A549 (cell line): ENCODE measurements at regions of chr20 and their contacts with region 1.

Region 1: DNA sequence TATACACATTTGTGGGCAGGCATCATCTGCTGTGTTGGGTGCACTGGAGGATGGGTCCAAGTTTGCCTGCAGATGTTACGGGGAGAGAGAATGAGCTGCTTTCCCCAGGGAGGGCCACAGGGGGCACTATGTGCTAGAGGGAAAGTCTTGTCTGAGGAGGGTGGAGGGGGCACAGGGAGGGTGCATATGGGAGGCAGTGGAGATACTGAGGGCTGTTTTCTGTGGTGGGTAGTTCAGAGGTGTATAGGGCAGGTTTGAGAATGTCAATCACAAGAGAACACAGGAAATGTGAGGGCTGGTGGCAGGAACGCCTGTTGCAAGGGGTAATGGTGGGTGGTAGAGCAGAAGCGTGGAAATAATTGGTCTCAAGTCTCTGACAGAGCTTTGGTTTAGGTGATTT is 7.7 kb upstream of the PTPRA start:
- DNase-seq: no peak
- ATAC-seq: peak in 1 of 2 experiments; percentile 35; a peak in 2 of 6 replicates
- H3K4me3 ChIP-seq: no peak overlapping the region
- H3K27ac ChIP-seq: no peak overlapping the region
- H3K4me1 ChIP-seq: peaks cover 15% of the 10 kb centered on the region
- CTCF ChIP-seq: no peak
- EP300 ChIP-seq: no peak
- POLR2A ChIP-seq: no peak
- RAD21 ChIP-seq: peak in 1 of 2 experiments; percentile 37; a peak in 2 of 5 replicates

Region 2: GRCh38 chr20:2812189-2812588 is 53.4 kb before region 1 on chr20:
- CTCF ChIA-PET with region 1: no interaction called
- POLR2A ChIA-PET with region 1: interaction called, 13 read pairs
- DNase-seq: no peak
- ATAC-seq: no peak
- H3K4me3 ChIP-seq: no peak overlapping the region
- H3K27ac ChIP-seq: no peak overlapping the region
- H3K4me1 ChIP-seq: peaks cover 20% of the 10 kb centered on the region
- CTCF ChIP-seq: no peak
- EP300 ChIP-seq: no peak
- POLR2A ChIP-seq: no peak
- RAD21 ChIP-seq: no peak

Region 3: DNA sequence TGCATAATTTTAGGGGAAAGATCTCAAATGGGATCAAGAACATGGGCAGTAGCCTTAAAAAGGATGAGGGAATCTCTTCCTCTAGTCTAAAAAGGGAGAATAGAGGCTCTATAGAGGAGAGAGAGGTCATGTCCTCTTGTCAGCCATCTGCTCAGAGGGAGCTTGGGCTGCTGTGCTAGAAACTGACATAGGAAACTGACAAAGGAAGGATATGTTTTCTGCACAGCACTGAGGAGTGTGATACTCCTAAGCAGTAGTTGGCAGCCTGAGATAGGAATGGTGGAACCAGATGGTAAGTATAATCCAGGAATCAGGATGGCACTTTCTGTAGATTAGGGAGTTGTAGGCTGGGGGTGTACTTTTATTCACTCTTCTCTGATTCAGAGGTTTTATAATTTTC is 66.9 kb after region 1 on chr20:
- CTCF ChIA-PET with region 1: no interaction called
- POLR2A ChIA-PET with region 1: no interaction called
- DNase-seq: no peak
- ATAC-seq: no peak
- H3K4me3 ChIP-seq: no peak overlapping the region
- H3K27ac ChIP-seq: no peak overlapping the region
- H3K4me1 ChIP-seq: no peaks in the 10 kb centered on the region
- CTCF ChIP-seq: no peak
- EP300 ChIP-seq: no peak
- POLR2A ChIP-seq: no peak
- RAD21 ChIP-seq: no peak